ENCODE measurements at regions of chr3 and their contacts with region 1.

Region 1: DNA sequence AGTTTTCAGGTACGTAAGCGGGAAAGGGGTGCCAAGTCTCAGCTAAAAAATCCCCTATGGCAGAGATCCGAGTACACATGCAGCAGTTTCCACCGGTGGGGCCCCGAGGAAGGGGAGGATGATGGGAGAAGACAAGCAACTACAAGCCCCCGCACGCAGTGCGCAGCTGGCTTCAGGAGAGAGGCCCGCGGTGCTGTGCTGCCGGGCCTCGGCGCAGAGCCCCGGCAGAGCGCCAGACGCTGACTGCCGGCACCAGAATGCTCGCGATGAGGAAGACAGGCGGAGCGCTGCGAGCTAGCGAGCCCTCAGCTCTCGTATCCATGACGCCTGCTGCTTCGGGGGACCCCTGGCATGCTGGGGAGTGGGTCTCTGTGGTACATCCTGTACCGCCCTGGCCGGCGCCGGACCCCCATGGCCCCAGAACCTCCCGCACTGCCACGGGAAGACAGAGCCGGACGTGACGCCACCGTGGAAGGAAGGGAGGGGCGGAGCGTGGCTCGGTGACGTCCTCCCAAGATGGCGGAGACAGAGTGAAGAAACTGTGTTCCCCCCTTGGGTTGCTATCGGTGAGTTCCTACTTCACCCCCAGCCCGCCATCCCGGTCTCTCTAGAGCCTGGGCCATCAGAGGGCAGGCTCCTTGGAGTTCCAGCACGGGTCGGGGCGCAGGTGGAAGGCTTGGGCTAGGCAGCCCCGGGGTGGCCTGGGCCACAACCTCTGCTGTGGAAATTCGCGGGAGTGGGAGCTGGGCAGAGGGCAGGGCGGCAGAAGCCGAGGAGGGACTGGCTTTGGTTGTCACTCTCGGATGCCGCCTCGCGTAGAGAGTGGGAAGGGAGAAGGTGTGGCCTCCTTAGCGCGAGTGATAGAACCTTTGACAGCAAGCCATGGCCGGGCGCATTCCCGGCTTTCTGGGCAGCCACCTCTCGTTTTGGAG is at the start of gene MYNN:
- DNase-seq: peak; percentile 86
- ATAC-seq: peak; percentile 82
- H3K4me3 ChIP-seq: peak within 1 kb of the TSS; percentile 96
- H3K27ac ChIP-seq: peak within 1 kb of the TSS; percentile 90
- H3K4me1 ChIP-seq: peaks cover 16% of the 10 kb centered on the region
- H3K27me3 ChIP-seq: no peaks in the 10 kb centered on the region
- CTCF ChIP-seq: no peak
- total RNA-seq, gene MYNN: 7.4 and 12.9 TPM in 2 replicates

Region 2: GRCh38 chr3:169173244-169174015 is 599.7 kb before region 1 on chr3:
- CTCF ChIA-PET with region 1: no interaction called
- POLR2A ChIA-PET with region 1: interaction called, 18 read pairs
- intact Hi-C with region 1: no loop called
- DNase-seq: peak; percentile 96
- ATAC-seq: peak; percentile 77
- H3K4me3 ChIP-seq: peak overlapping the region; percentile 8; the same call in 1 of the 2 replicates
- H3K27ac ChIP-seq: peak overlapping the region; percentile 64
- H3K4me1 ChIP-seq: peaks cover 40% of the 10 kb centered on the region
- H3K27me3 ChIP-seq: no peaks in the 10 kb centered on the region
- CTCF ChIP-seq: no peak

Region 3: DNA sequence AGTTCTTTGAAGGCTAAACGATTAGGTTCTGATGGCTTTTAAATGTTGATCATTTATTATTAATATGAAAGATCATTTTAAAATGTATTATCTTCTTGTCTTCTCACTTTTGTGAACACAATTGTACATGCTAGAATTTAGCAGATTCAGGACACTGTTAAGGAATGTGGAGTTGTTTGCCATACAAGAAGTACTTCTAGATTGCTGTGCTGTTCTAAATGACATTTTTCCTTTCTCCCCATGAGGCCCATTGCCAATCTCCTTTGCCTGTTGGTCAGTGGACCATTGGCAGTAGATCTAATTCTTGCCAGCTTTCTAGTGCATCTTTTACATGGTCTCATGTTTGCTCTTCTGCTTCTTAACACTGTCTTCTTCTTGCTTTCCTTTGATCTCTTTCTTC is 352.0 kb before region 1 on chr3:
- CTCF ChIA-PET with region 1: no interaction called
- POLR2A ChIA-PET with region 1: no interaction called
- intact Hi-C with region 1: no loop called
- DNase-seq: no peak
- ATAC-seq: no peak
- H3K4me3 ChIP-seq: no peak overlapping the region
- H3K27ac ChIP-seq: no peak overlapping the region
- H3K4me1 ChIP-seq: peaks cover 8% of the 10 kb centered on the region; the same call in 1 of the 2 replicates
- H3K27me3 ChIP-seq: no peaks in the 10 kb centered on the region
- CTCF ChIP-seq: no peak

Region 4: GRCh38 chr3:169812332-169813235 is 39.4 kb after region 1 on chr3 and contains the starts of genes LRRC34 and LRRIQ4:
- CTCF ChIA-PET with region 1: no interaction called
- POLR2A ChIA-PET with region 1: no interaction called
- intact Hi-C with region 1: loop called (anchors 5 kb)
- DNase-seq: peak; percentile 67
- ATAC-seq: peak; percentile 79
- H3K4me3 ChIP-seq: peak within 1 kb of the TSS; percentile 75
- H3K27ac ChIP-seq: peak within 1 kb of the TSS; percentile 10; the same call in 1 of the 2 replicates
- H3K4me1 ChIP-seq: peaks cover 15% of the 10 kb centered on the region; the same call in 1 of the 2 replicates
- H3K27me3 ChIP-seq: no peaks in the 10 kb centered on the region
- CTCF ChIP-seq: no peak
- total RNA-seq, gene LRRC34: 1.8 and 3.8 TPM in 2 replicates
- total RNA-seq, gene LRRIQ4: 0.52 TPM in 1 of 2 replicates, not detected in the other

Region 5: DNA sequence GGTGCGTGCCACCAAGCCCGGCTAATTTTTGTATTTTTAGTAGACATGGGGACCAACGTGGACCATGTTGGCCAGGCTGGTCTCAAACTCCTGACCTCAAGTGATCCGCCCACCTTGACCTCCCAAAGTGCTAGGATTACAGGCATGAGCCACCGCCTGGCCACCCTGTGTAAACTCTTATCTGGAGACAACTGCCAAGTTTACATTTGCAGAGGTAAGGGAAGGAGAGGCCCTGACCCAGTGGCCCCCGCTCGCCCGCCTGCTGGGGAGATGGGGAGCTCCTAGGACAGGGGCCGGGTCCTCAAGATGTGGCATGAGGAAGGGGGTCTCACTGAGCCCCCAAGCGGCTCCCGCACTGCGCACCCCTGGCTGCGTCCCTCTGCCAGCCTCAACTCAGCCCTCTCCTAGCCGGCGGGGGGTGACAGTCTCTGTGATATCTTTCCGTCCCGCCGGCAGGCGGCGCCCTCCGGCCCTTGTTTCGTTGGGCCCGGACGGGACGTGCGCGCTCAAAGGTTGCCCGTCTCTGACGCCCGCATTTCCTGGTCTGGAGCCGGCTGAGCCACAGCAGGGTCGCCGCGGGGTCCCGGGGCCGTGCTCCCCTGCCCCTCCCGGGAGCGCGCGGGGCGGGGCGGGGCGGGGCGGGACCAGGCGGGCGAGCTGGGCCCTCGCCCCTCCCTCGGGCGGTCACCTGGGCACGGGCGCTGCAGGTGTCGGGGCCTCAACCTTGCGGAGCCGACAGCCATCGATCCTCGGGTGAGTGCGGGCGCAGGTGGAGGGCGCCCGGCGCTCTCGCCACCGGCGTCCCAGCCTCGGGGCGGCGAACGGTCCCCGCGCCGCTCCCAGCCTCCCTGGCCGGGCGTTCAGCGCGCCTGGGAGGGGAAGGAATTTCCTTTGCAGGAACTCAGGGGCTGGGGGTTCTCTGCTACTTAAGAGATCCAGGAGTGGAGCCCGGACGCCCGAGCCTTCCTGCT is 264.6 kb after region 1 on chr3 and contains the start of gene GPR160:
- CTCF ChIA-PET with region 1: no interaction called
- POLR2A ChIA-PET with region 1: no interaction called
- intact Hi-C with region 1: loop called (anchors 5 kb)
- DNase-seq: peak; percentile 75
- ATAC-seq: peak; percentile 72
- H3K4me3 ChIP-seq: peak within 1 kb of the TSS; percentile 77
- H3K27ac ChIP-seq: no peak within 1 kb of the TSS
- H3K4me1 ChIP-seq: peaks cover 9% of the 10 kb centered on the region; the same call in 1 of the 2 replicates
- H3K27me3 ChIP-seq: peaks cover 10% of the 10 kb centered on the region
- CTCF ChIP-seq: peak; percentile 79
- total RNA-seq, gene GPR160: 13.0 and 15.7 TPM in 2 replicates

Measured in PC-3 (cell line).